ENCODE measurements at regions of chr7 and their contacts with region 1.

Region 1: DNA sequence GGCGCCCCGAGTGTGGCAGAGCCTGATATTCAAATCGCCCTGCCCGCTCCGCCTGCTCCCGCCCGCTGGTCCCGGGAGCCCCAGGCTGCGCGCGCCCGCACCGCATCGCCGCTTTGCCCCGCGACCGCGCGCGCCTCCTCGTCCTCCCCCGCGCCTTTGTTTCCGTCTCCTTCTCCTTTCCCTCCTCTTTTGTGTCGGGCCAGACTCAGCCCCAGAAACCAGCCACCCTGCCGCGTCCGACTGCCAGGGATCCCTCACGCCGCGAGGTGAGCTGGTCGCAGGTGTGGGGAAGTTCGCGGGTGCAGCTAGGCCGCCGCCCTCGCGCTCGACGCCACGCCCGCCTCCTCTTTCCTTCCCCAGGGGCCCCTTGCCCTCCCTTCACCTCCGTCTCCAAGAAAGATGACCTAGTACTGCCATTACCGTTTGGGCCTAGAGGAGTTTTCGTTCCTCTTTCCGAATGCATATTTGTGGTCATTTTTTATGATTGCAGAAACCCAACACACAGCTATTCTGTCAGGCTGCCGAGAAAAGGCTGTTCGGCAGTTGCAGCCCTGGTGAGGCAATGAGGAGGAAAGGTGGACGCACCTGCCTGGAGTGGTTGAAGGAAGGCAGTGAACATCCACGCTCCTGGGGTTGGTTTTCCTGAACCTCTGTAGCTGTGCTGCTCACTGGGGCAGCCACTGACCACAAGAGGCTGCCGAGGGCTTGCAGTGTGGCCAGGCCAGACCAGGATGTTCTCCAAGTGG is 107.3 kb downstream of the SNX10 start:
- DNase-seq: peak; percentile 87
- CTCF ChIP-seq: no peak

Region 2: GRCh38 chr7:26216049-26216448 is 182.9 kb before region 1 on chr7:
- CTCF ChIA-PET with region 1: no interaction called
- POLR2A ChIA-PET with region 1: no interaction called
- DNase-seq: no peak
- CTCF ChIP-seq: no peak

Region 3: DNA sequence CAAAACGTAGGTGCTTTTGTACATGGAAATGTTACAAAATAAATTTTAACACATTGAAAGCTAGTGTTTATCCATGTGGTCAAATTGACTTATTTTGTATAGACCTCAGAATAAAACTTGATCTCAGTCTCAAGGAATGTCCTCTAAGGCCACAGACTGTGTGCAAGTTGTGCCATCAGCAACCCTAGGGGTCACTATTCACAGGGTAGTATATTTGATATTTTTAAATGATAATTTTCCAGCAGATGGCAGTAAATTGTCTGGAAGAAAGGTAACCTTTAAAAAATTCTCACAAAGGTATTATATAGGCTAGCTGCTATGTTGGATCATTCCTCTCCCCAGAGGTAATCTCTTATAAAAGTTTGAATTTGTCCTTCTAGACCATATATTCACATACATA is 120.2 kb before region 1 on chr7:
- CTCF ChIA-PET with region 1: no interaction called
- POLR2A ChIA-PET with region 1: no interaction called
- DNase-seq: no peak
- CTCF ChIP-seq: peak; percentile 28

Region 4: DNA sequence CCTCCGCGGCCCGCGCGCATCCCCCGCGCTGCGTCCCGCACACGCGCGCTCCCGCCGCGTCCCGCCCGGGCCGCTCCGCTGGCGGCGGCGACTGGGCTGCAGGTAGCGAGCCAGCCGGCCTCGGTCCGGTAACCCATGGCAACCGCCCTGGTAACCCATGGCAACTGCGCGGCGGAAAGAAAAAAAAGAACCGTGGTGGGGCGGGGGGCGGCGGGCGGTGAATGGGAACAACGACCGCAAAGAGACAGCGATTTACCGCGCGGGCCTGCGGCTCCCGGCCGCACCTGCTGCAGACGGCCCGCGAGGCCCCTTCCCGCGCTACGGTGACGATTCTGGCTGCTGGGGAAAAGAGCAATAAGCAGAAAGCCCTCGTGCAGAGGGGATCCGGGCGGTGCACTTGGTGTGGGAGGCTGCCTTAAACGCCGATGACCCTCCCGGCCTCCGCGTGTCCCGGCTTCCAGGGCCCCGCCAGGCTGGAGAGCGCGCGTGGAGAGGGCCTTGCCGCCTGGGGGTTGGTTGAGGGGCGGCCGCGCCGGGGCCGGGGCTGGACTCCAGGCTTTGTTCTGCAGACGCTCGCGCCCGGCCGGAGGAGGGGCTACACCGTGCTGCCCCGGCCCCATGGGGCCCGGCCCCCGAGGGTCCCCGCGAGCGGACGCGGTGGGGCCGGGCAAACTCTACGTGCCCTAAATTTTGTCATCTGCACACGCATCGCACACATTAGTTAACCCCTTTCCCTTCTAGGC is 22.6 kb before region 1 on chr7:
- CTCF ChIA-PET with region 1: interaction called, 10 read pairs
- POLR2A ChIA-PET with region 1: no interaction called
- DNase-seq: peak; percentile 36
- CTCF ChIP-seq: no peak

Region 5: GRCh38 chr7:26388256-26388655 is 10.7 kb before region 1 on chr7:
- CTCF ChIA-PET with region 1: interaction called, 13 read pairs
- POLR2A ChIA-PET with region 1: interaction called, 3 read pairs
- DNase-seq: peak; percentile 32
- CTCF ChIP-seq: no peak

Region 6: DNA sequence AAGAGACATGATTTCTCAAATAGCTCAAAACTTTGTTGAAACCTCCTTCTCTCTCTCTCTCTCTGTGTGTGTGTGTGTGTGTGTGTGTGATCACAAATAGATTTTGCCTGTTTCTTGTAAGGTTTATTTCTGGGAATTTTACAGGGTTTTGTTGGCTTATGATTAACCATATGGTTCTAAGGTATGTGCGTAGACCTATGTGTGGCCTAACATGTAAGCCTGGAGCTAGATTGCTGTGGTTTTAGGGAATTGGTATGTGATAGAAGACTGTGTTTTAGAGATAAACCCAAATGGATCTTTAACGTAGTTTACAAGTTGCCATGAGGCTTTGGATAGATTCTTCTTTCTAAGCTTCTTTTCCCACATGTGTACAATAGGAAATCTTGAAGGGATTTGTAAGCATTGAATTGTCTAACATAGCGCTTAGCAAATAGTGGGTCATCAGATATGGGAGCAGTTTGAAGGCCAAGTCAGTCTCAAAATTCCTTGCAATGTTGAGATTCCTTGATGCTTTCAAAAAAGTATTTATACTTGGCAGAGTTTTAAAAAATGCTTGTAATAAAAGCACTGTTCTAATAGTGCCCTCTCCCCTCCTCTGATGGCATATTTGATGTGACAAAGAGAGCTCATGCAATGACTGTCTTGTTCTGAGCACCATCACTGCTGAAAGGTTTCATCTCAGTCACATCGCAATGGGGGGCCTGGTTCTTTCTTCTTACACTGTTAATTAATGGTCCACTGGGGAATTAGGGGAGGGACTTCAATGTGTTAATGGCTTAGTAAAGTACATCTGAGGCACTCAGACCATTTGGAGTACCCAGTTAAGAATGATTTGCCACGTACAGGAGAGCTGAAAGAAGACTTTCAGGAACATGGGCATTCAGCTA is 11.0 kb after region 1 on chr7:
- CTCF ChIA-PET with region 1: interaction called, 21 read pairs
- POLR2A ChIA-PET with region 1: no interaction called
- DNase-seq: no peak
- CTCF ChIP-seq: no peak

Region 7: GRCh38 chr7:26500749-26501352 is 101.9 kb after region 1 on chr7:
- CTCF ChIA-PET with region 1: interaction called, 12 read pairs
- POLR2A ChIA-PET with region 1: no interaction called
- DNase-seq: peak; percentile 59
- CTCF ChIP-seq: peak; percentile 50

Measured in GM10248 (cell line).